Ovary (tissue), 10 donors: ENCODE measurements at regions of chr10 and their contacts with region 1.

Region 1: GRCh38 chr10:52215745-52216361 is 98.2 kb upstream of the DKK1 start:
- DNase-seq: peak in 3 of 5 donors; percentile 15 to 60 (median 29)
- H3K4me3 ChIP-seq: no peak overlapping the region
- H3K27ac ChIP-seq: no peak overlapping the region
- H3K4me1 ChIP-seq: no peaks in the 10 kb centered on the region
- H3K27me3 ChIP-seq: no peaks in the 10 kb centered on the region
- CTCF ChIP-seq: peak; percentile 40 to 83 (median 51)
- EP300 ChIP-seq: no peak
- POLR2A ChIP-seq: no peak

Region 2: DNA sequence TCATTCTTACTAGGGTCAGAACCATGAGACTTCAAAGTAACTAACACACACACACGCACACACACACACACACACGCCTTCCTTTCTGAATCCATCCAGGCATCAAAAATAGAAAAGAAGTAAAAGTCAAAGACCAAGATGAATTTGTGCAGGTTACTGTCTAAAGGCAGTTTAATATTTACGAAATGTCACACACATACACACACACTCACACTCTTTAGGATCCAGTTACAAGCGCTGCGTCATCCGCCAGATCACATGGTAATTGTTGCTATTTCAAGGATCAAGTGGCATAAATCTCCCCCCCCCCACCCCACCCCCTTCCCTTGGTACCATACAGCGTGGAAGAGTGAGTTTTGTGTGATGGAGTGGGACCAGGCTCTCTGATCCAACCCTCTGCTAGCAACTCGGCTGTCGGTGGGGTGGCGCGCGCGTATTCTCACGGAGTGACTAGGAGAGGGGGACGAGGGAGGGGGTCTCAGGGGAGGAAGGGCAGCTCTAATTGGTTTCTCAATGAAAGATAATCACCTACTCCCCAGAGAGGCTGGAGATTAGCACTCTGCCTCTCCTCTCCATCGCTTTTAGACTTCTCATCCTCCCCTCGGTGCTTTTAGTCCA is 1225.2 kb before region 1 on chr10:
- intact Hi-C with region 1: loop called in 1 of 4 experiments (anchors 5 kb)
- DNase-seq: peak; percentile 26 to 61 (median 44)
- H3K4me3 ChIP-seq: peak overlapping the region; percentile 82
- H3K27ac ChIP-seq: peak overlapping the region; percentile 9 to 62
- H3K4me1 ChIP-seq: peaks cover 2% of the 10 kb centered on the region
- H3K27me3 ChIP-seq: no peaks in the 10 kb centered on the region
- CTCF ChIP-seq: no peak
- EP300 ChIP-seq: no peak
- POLR2A ChIP-seq: no peak